ENCODE measurements at regions of chr3 and their contacts with region 1.

Region 1: GRCh38 chr3:172129870-172130683 is 90.7 kb downstream of the FNDC3B start:
- DNase-seq: peak; percentile 98
- H3K4me3 ChIP-seq: no peak overlapping the region
- H3K27ac ChIP-seq: peak overlapping the region; percentile 98
- H3K4me1 ChIP-seq: peaks cover 20% of the 10 kb centered on the region
- H3K27me3 ChIP-seq: no peaks in the 10 kb centered on the region
- CTCF ChIP-seq: no peak

Region 2: GRCh38 chr3:172087602-172088580 is 42.2 kb before region 1 on chr3:
- CTCF ChIA-PET with region 1: no interaction called
- dilution Hi-C with region 1: no loop called
- in situ Hi-C with region 1: no loop called
- intact Hi-C with region 1: loop called (anchors 5 kb)
- DNase-seq: peak; percentile 57
- H3K4me3 ChIP-seq: peak overlapping the region in 1 of 3 experiments; percentile 29
- H3K27ac ChIP-seq: peak overlapping the region; percentile 85
- H3K4me1 ChIP-seq: peaks cover 41% of the 10 kb centered on the region
- H3K27me3 ChIP-seq: no peaks in the 10 kb centered on the region
- CTCF ChIP-seq: no peak

Region 3: GRCh38 chr3:172102123-172102882 is 27.8 kb before region 1 on chr3:
- CTCF ChIA-PET with region 1: no interaction called
- dilution Hi-C with region 1: no loop called
- in situ Hi-C with region 1: no loop called
- intact Hi-C with region 1: loop called (anchors 1 kb)
- DNase-seq: no peak
- H3K4me3 ChIP-seq: no peak overlapping the region
- H3K27ac ChIP-seq: peak overlapping the region; percentile 95
- H3K4me1 ChIP-seq: peaks cover 61% of the 10 kb centered on the region
- H3K27me3 ChIP-seq: no peaks in the 10 kb centered on the region
- CTCF ChIP-seq: no peak

Region 4: DNA sequence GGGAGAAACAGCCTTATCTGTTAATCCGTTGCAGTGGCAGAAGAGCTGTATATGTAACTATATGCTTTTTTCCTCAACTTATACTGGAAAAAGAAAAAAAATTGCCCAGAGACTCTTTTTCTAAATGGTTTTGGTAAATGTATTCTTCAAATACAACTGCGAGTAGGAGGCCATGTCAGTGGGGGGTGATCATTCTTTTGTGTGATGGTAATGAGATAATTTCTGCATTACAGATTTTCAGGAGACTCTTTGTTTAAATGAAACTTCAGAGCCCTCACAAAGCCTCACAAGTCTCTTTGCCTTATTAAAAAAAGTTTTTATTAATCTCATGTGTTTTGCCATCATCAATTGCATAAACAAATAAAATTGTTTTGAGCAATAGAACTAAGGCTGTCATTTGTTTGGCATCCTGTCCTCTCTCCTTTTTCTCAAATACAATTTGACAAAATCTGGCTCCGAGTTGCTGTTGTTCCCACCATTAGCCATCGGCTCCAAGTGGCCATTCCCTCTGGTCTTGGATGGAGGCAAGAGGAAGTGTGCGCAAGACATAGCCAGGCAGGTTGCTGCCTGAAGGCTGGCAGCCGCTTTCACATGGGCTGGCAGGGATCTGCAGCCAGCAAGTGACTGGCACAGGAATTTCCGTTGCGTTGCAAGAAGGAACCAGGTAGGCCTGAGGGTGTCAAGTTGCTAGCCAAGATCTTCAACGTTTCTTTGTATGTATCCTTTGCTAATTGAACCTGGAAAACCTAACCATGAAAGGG is 26.0 kb after region 1 on chr3:
- CTCF ChIA-PET with region 1: no interaction called
- dilution Hi-C with region 1: no loop called
- in situ Hi-C with region 1: no loop called
- intact Hi-C with region 1: loop called (anchors 1 kb)
- DNase-seq: peak; percentile 95
- H3K4me3 ChIP-seq: no peak overlapping the region
- H3K27ac ChIP-seq: peak overlapping the region; percentile 87
- H3K4me1 ChIP-seq: peaks cover 72% of the 10 kb centered on the region
- H3K27me3 ChIP-seq: no peaks in the 10 kb centered on the region
- CTCF ChIP-seq: no peak

Region 5: GRCh38 chr3:172181932-172182586 is 52.0 kb after region 1 on chr3:
- CTCF ChIA-PET with region 1: no interaction called
- dilution Hi-C with region 1: no loop called
- in situ Hi-C with region 1: no loop called
- intact Hi-C with region 1: no loop called
- DNase-seq: peak; percentile 67
- H3K4me3 ChIP-seq: peak overlapping the region in 2 of 3 experiments; percentile 5 to 9
- H3K27ac ChIP-seq: peak overlapping the region; percentile 39
- H3K4me1 ChIP-seq: peaks cover 17% of the 10 kb centered on the region
- H3K27me3 ChIP-seq: no peaks in the 10 kb centered on the region
- CTCF ChIP-seq: no peak

Region 6: DNA sequence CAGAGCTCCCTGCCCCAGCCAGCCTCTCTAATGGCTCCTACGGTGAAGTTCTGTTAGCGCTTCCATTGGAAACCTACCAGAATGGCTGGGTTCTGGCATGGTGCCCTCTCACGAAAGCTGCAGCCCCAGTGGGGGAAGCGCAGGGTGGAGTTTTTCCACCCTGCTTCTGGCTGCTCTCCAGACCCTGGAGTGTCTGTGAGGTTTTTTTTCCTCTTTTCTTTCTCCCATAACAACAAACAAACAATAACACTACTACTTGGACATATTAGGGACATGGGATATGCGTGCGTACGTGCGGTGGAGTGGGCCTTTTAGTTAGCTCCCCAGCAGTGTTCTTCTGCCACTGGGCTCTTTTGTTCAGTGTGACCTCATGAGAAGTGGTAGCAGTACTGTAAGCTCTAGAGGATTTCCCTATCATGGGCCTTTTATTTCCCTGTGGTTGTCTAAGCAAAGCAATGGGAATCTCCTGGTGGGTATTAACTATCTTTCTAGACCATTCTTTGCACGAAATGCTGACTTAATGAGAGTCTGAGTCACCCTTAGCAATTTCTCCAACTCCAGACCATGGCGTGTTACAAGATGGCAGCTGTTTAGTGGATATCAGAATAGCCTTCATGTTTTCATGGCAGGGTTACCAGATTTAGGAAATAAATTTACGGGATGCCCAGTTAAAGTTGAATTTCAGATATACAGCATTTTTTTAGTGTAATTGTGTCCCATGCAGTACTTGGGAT is 71.2 kb after region 1 on chr3:
- CTCF ChIA-PET with region 1: no interaction called
- dilution Hi-C with region 1: no loop called
- in situ Hi-C with region 1: no loop called
- intact Hi-C with region 1: no loop called
- DNase-seq: peak; percentile 67
- H3K4me3 ChIP-seq: no peak overlapping the region
- H3K27ac ChIP-seq: peak overlapping the region; percentile 43
- H3K4me1 ChIP-seq: peaks cover 31% of the 10 kb centered on the region
- H3K27me3 ChIP-seq: no peaks in the 10 kb centered on the region
- CTCF ChIP-seq: no peak

Region 7: GRCh38 chr3:172367205-172368105 is 237.4 kb after region 1 on chr3:
- CTCF ChIA-PET with region 1: no interaction called
- dilution Hi-C with region 1: no loop called
- in situ Hi-C with region 1: no loop called
- intact Hi-C with region 1: no loop called
- DNase-seq: no peak
- H3K4me3 ChIP-seq: no peak overlapping the region
- H3K27ac ChIP-seq: no peak overlapping the region
- H3K4me1 ChIP-seq: no peaks in the 10 kb centered on the region
- H3K27me3 ChIP-seq: no peaks in the 10 kb centered on the region
- CTCF ChIP-seq: no peak

Measured in mammary epithelial cell (primary cell).